CD4-positive, alpha-beta memory T cell (primary cell): ENCODE measurements at regions of chr14 and their contacts with region 1.

Region 1: DNA sequence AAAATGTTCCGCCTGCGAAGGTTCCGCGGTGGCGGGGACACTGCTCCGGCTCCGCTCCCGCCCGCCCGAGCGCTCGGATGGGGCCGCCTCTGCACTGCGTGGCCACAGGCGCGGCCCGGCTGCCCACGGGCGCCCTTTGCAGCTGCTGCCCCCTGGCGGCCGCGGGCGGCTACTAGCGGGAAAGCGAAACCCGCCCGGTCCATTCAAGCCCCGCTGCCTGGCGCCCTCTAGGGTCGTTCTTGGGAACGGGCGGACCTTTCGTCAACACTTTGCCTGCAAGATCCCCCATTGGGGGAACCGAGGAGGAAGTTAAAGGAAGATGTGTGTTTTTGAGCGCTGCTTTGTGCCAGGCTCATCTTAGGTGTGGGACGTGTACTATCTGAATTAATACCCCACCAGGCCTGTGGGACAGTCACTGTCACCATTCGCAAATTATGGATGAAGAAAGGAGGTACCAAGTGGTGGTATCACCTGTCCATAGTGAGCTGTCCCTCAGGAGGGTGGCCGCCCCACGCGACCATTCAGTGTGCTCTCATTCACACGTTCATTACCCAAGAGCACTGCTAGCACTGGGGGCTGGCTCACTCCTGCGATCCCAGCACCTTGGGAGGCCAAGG is 19.4 kb downstream of the GPR132 start:
- DNase-seq: peak; percentile 86 to 91 (median 88)
- H3K4me3 ChIP-seq: no peak overlapping the region
- H3K4me3 Mint-ChIP-seq: peak overlapping the region in 4 of 8 donors; percentile 5 to 52 (median 27)
- H3K27ac ChIP-seq: no peak overlapping the region
- H3K27ac Mint-ChIP-seq: peak overlapping the region in 6 of 7 donors; percentile 77 to 86 (median 82)
- H3K4me1 ChIP-seq: peaks cover 9% of the 10 kb centered on the region
- H3K4me1 Mint-ChIP-seq: peaks cover 5 to 14% (median 9%) of the 10 kb centered on the region in 4 donors
- H3K27me3 ChIP-seq: no peaks in the 10 kb centered on the region
- H3K27me3 Mint-ChIP-seq: peaks cover 2 to 3% of the 10 kb centered on the region in 2 donors

Region 2: DNA sequence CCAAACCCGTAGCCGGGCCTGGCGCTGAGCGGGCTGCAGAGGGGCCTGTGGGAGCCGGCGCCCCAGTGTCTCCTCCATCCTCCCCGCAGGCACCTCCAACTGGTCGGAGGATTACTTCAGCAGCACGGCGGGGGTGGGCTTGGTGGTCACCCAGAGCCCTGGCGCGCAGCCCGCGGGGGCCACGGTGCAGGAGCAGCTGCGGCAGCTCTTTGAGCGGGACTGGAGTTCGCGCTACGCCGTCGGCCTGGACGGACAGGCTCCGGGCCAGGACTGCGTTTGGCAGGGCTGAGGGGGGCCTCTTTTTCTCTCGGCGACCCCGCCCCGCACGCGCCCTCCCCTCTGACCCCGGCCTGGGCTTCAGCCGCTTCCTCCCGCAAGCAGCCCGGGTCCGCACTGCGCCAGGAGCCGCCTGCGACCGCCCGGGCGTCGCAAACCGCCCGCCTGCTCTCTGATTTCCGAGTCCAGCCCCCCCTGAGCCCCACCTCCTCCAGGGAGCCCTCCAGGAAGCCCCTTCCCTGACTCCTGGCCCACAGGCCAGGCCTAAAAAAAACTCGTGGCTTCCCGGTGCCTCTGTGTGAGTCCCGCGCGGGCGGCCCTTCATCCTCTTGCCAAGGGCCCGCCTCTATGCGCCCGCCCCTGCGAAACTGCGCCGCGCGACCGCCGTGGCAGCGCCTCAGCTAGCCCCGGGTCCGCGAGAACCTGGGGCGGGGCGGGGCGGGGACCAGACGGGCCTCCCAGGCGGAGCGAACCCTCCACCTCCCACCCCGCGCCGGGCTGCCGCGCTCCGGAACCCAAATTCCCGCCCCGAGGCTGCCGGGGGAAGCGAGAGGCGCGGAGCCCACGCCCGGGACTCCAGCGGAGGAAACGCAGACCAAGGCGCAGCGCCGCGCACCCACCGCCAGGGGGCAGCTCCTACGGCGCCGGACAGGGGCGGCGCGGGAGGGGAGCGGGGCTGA is 112.9 kb before region 1 on chr14:
- CTCF ChIA-PET with region 1: interaction called, 13 read pairs
- POLR2A ChIA-PET with region 1: no interaction called
- intact Hi-C with region 1: loop called (anchors 1 kb)
- DNase-seq: peak; percentile 74 to 85 (median 80)
- H3K4me3 ChIP-seq: peak overlapping the region in 1 of 2 donors; percentile 28
- H3K4me3 Mint-ChIP-seq: peak overlapping the region in 7 of 8 donors; percentile 17 to 73 (median 62)
- H3K27ac ChIP-seq: no peak overlapping the region
- H3K27ac Mint-ChIP-seq: no peak overlapping the region
- H3K4me1 ChIP-seq: no peaks in the 10 kb centered on the region
- H3K4me1 Mint-ChIP-seq: peaks cover 2 to 9% (median 3%) of the 10 kb centered on the region in 4 donors
- H3K27me3 ChIP-seq: no peaks in the 10 kb centered on the region
- H3K27me3 Mint-ChIP-seq: peaks cover 6 to 11% of the 10 kb centered on the region in 2 donors

Region 3: GRCh38 chr14:104985675-104986525 is 59.9 kb before region 1 on chr14 and contains the start of gene CLBA1:
- CTCF ChIA-PET with region 1: interaction called, 27 read pairs
- POLR2A ChIA-PET with region 1: interaction called, 26 read pairs
- intact Hi-C with region 1: no loop called
- DNase-seq: peak; percentile 86 to 92 (median 90)
- H3K4me3 ChIP-seq: peak within 1 kb of the TSS in 1 of 2 donors; percentile 52
- H3K4me3 Mint-ChIP-seq: peak within 1 kb of the TSS; percentile 67 to 83 (median 79)
- H3K27ac ChIP-seq: peak within 1 kb of the TSS; percentile 61
- H3K27ac Mint-ChIP-seq: peak within 1 kb of the TSS; percentile 81 to 92 (median 88)
- H3K4me1 ChIP-seq: peaks cover 8% of the 10 kb centered on the region
- H3K4me1 Mint-ChIP-seq: peaks cover 0 to 10% (median 3%) of the 10 kb centered on the region in 4 donors
- H3K27me3 ChIP-seq: no peaks in the 10 kb centered on the region
- H3K27me3 Mint-ChIP-seq: peaks cover 2 to 3% of the 10 kb centered on the region in 2 donors
- total RNA-seq, gene CLBA1: 1.3 to 1.6 TPM

Region 4: GRCh38 chr14:105020815-105021655 is 24.8 kb before region 1 on chr14 and contains the start of gene CDCA4:
- CTCF ChIA-PET with region 1: interaction called, 46 read pairs
- POLR2A ChIA-PET with region 1: interaction called, 17 read pairs
- intact Hi-C with region 1: loop called (anchors 1 kb)
- DNase-seq: peak; percentile 94 to 98 (median 97)
- H3K4me3 ChIP-seq: peak within 1 kb of the TSS; percentile 69 to 71
- H3K4me3 Mint-ChIP-seq: peak within 1 kb of the TSS; percentile 92 to 98 (median 94)
- H3K27ac ChIP-seq: peak within 1 kb of the TSS; percentile 75
- H3K27ac Mint-ChIP-seq: peak within 1 kb of the TSS; percentile 94 to 97 (median 96)
- H3K4me1 ChIP-seq: peaks cover 72% of the 10 kb centered on the region
- H3K4me1 Mint-ChIP-seq: peaks cover 29 to 84% (median 57%) of the 10 kb centered on the region in 4 donors
- H3K27me3 ChIP-seq: no peaks in the 10 kb centered on the region
- H3K27me3 Mint-ChIP-seq: peaks cover 0 to 1% of the 10 kb centered on the region in 2 donors
- total RNA-seq, gene CDCA4: 17.1 to 19.0 TPM

Region 5: GRCh38 chr14:105034314-105035039 is 11.3 kb before region 1 on chr14:
- CTCF ChIA-PET with region 1: interaction called, 24 read pairs
- POLR2A ChIA-PET with region 1: interaction called, 4 read pairs
- intact Hi-C with region 1: no loop called
- DNase-seq: no peak
- H3K4me3 ChIP-seq: no peak overlapping the region
- H3K4me3 Mint-ChIP-seq: peak overlapping the region in 7 of 8 donors; percentile 28 to 94 (median 53)
- H3K27ac ChIP-seq: no peak overlapping the region
- H3K27ac Mint-ChIP-seq: peak overlapping the region in 5 of 7 donors; percentile 54 to 94 (median 64)
- H3K4me1 ChIP-seq: peaks cover 7% of the 10 kb centered on the region
- H3K4me1 Mint-ChIP-seq: peaks cover 6 to 32% (median 20%) of the 10 kb centered on the region in 4 donors
- H3K27me3 ChIP-seq: no peaks in the 10 kb centered on the region
- H3K27me3 Mint-ChIP-seq: no peaks in the 10 kb centered on the region

Region 6: DNA sequence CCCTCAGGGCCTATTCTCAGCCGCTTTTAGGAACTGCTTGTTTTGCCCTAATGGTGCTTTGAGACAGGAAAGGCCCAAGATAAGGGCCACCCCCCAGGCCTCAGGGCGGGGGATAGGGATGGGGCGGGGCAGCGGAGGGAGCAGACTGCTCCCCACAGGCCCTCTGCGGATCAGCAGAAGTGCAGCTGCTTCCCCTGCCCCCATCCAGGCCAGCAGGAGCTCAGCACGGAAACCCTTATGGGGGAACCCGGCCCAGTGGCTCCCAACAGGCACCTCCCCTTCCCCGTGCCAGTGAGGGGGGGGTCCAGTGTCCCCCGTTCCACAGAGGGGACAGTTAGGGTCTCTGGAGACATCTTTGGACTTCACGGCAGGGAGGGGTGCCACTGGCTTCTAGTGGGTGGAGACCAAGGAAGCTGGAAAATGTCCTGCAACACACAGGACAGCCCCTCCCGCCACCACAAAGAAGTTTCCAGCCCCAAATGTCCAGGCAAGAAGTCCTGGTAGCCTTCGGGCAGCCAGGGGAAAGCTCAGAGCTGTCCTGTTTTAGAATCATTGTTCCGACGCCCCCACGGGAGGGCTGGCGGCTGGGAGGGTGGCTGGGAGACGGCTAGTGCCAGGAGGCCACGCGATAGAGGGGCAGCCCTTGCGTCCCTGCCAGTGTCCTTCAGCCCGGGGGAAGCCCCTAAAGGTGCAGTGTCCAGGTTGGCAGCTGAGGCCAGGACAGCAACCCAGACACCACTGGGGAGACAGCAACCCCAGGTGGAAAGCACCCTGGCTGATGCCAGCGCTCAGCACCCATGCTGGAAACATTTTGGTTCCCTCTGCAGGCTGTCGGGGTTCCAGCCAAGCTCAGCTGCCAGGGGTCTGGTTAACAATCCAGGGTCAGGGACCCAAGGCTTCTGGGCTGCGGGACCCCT is 29.8 kb after region 1 on chr14:
- CTCF ChIA-PET with region 1: interaction called, 11 read pairs
- POLR2A ChIA-PET with region 1: no interaction called
- intact Hi-C with region 1: no loop called
- DNase-seq: no peak
- H3K4me3 ChIP-seq: no peak overlapping the region
- H3K4me3 Mint-ChIP-seq: peak overlapping the region in 2 of 8 donors; percentile 6 to 46
- H3K27ac ChIP-seq: no peak overlapping the region
- H3K27ac Mint-ChIP-seq: no peak overlapping the region
- H3K4me1 ChIP-seq: peaks cover 27% of the 10 kb centered on the region
- H3K4me1 Mint-ChIP-seq: peaks cover 16 to 48% (median 23%) of the 10 kb centered on the region in 4 donors
- H3K27me3 ChIP-seq: no peaks in the 10 kb centered on the region
- H3K27me3 Mint-ChIP-seq: no peaks in the 10 kb centered on the region

Region 7: GRCh38 chr14:105480952-105481801 is 435.4 kb after region 1 on chr14:
- CTCF ChIA-PET with region 1: no interaction called
- POLR2A ChIA-PET with region 1: no interaction called
- intact Hi-C with region 1: no loop called
- DNase-seq: peak; percentile 89 to 95 (median 90)
- H3K4me3 ChIP-seq: peak overlapping the region; percentile 49 to 80
- H3K4me3 Mint-ChIP-seq: peak overlapping the region; percentile 83 to 92 (median 86)
- H3K27ac ChIP-seq: peak overlapping the region; percentile 97
- H3K27ac Mint-ChIP-seq: peak overlapping the region; percentile 96 to 100 (median 100)
- H3K4me1 ChIP-seq: peaks cover 82% of the 10 kb centered on the region
- H3K4me1 Mint-ChIP-seq: peaks cover 31 to 78% (median 57%) of the 10 kb centered on the region in 4 donors
- H3K27me3 ChIP-seq: no peaks in the 10 kb centered on the region
- H3K27me3 Mint-ChIP-seq: no peaks in the 10 kb centered on the region